Endothelial cell of umbilical vein (primary cell): ENCODE measurements at regions of chr7 and their contacts with region 1.

Region 1: DNA sequence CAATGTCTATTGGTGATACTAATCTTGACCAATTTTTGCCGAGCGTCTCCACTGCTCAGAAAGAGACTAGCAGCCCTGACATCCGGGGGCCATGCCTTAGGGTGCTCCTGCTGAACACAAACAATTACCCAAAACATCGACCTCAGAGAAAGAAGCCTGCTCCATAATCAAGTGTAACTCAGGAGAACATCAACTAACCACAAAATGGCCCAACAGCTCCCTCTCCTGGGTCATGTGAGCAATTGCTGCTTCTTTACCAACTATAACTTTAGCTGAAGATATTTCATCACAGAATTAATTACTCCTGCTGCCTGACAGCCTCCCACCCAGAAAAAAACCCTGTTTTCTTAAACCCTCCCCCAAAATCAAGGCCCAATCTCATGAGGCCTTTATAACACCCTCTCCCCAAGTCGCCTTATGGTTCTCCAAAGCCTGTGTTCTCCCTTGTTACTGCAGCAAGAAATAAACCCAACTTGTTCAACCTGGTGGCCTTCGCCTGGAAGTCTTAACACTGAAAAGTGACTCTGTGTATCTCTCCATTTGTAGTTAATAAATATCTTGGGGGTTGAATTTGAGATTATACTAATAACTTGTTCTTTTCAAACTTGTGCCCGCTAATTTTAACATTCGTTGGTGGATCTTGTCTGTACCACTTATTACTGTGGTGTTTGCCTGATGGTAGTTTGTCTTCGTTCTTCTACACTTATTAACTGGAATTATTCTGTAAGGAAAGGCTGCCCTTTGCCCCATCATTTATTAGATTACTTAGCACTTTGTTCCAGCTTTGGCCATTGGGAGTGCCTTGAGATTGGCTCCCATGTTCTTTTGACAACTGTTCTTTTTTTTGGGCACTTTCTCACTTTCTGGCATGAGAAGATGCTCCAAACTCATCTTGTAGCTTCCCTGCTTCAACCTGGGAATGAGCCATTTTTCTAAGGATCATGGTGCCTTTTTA is 21.2 kb upstream of the RAMP3 start:
- DNase-seq: peak; percentile 73
- H3K4me3 ChIP-seq: no peak overlapping the region
- H3K27ac ChIP-seq: no peak overlapping the region
- H3K4me1 ChIP-seq: no peaks in the 10 kb centered on the region
- H3K27me3 ChIP-seq: peaks cover 4 to 5% of the 10 kb centered on the region in 2 experiments
- CTCF ChIP-seq: peak; percentile 79 to 83
- POLR2A ChIP-seq: no peak

Region 2: DNA sequence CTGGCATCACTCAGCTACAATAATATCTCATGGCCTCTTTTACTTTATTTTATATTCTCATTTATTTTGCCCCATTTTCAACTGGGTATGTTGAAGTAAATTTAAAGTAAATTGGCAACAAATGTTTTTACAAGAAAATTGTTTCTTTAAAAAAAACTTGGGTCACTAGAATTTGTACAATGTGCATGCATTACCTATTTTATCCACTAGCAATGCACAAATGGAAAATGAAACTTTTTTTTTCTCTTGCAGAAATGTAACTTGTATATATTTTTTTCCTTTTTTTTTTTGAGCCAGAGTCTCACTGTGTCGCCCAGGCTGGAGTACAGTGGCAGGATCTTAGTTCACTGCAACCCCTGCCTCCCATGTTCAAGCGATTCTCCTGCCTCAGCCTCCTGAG is 278.2 kb before region 1 on chr7:
- CTCF ChIA-PET with region 1: interaction called, 66 read pairs
- POLR2A ChIA-PET with region 1: no interaction called
- dilution Hi-C with region 1: no loop called
- intact Hi-C with region 1: loop called (anchors 1 kb)
- DNase-seq: no peak
- H3K4me3 ChIP-seq: no peak overlapping the region
- H3K27ac ChIP-seq: no peak overlapping the region
- H3K4me1 ChIP-seq: no peaks in the 10 kb centered on the region
- H3K27me3 ChIP-seq: no peaks in the 10 kb centered on the region
- CTCF ChIP-seq: no peak
- POLR2A ChIP-seq: no peak

Region 3: DNA sequence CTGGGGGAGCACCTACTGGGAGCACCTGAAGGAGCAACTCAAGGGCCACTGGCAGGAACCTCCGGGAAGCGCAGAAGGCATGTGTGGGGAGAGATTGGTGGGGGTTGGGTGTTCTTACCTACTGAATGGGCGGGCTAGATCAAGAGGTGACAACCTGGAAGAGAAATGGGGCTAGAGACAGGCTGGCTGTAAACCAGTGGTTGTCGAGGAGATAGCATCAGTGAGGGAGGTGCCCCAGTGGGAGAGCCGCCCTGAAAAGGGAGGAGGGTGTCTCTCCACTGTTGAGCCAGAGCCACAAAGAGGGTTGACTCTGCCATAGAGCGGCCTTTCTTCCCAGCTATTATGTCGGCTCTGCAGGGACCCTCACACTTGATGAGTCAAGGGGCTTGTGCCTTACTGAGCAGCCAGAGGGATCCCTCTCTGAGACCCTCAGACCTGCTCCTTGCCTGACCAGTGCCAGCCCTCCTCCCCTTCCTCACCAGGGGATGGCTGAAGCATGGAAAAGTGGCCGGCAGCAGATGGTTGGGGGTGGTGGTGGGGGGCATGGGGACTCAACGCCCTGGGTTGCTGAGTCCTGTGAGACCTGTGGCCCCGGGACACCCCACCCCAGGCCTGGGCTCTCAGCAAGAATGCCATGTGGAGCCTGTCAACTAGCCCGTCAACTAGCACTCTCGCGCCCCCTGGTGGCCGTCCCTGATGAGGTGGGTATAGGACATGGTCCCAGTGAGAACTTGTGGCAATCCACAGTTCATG is 214.6 kb before region 1 on chr7:
- CTCF ChIA-PET with region 1: interaction called, 11 read pairs
- POLR2A ChIA-PET with region 1: no interaction called
- dilution Hi-C with region 1: no loop called
- intact Hi-C with region 1: loop called (anchors 1 kb)
- DNase-seq: peak; percentile 69
- H3K4me3 ChIP-seq: no peak overlapping the region
- H3K27ac ChIP-seq: no peak overlapping the region
- H3K4me1 ChIP-seq: no peaks in the 10 kb centered on the region
- H3K27me3 ChIP-seq: peaks cover 0 to 3% of the 10 kb centered on the region in 2 experiments
- CTCF ChIP-seq: peak; percentile 75 to 91
- POLR2A ChIP-seq: no peak

Region 4: GRCh38 chr7:44967571-44968446 is 168.6 kb before region 1 on chr7:
- CTCF ChIA-PET with region 1: interaction called, 585 read pairs
- POLR2A ChIA-PET with region 1: no interaction called
- dilution Hi-C with region 1: no loop called
- intact Hi-C with region 1: loop called (anchors 1 kb)
- DNase-seq: peak; percentile 29
- H3K4me3 ChIP-seq: no peak overlapping the region
- H3K27ac ChIP-seq: no peak overlapping the region
- H3K4me1 ChIP-seq: no peaks in the 10 kb centered on the region
- H3K27me3 ChIP-seq: no peaks in the 10 kb centered on the region
- CTCF ChIP-seq: peak in 1 of 2 donors; percentile 59
- POLR2A ChIP-seq: no peak

Region 5: GRCh38 chr7:45092100-45092928 is 44.1 kb before region 1 on chr7:
- CTCF ChIA-PET with region 1: interaction called, 10 read pairs
- POLR2A ChIA-PET with region 1: no interaction called
- dilution Hi-C with region 1: no loop called
- intact Hi-C with region 1: no loop called
- DNase-seq: no peak
- H3K4me3 ChIP-seq: no peak overlapping the region
- H3K27ac ChIP-seq: no peak overlapping the region
- H3K4me1 ChIP-seq: no peaks in the 10 kb centered on the region
- H3K27me3 ChIP-seq: peaks cover 3 to 11% of the 10 kb centered on the region in 2 experiments
- CTCF ChIP-seq: no peak
- POLR2A ChIP-seq: no peak

Region 6: DNA sequence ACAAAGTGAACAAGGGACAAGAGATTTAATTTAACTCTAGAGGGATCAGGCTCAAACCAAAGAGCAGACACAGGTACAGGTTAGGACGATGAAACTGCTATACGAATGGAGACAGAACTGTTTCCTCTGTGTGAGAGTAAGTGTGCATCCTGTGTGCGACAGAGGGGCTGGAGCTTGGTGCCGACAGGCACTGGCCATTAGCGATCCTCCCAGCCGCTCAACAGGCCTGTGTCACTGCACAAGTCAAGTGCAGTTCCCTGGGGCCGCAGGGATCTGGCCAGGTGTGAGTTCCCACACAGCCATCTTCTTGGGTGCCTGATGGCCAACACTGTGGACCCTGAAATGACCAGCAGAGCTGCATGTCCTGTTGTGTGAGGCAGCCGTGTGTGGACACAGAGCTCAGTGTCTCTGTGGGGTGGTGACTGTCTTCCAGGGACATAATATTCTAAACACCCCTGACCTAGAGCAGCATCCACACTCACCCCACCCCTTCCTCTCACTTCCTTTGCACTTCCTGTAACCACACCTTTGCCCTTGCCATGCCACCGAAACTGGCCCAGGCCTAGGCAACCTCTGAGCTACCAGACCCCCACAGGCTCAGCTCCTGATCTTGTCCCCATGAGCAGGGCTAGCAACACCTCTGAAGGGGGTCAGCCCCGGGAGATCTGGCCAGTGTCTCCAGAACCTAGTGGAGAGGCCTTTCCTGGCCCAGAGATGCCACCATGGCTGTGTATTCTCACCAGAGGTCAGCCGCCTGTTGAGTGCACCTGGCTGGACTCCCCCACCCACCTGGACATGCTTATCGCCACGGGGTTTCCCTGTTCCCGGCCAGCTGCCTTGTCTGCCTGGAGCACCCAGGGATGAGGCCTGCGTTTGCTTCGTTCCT is 13.2 kb before region 1 on chr7:
- CTCF ChIA-PET with region 1: interaction called, 22 read pairs
- POLR2A ChIA-PET with region 1: no interaction called
- dilution Hi-C with region 1: no loop called
- intact Hi-C with region 1: no loop called
- DNase-seq: no peak
- H3K4me3 ChIP-seq: no peak overlapping the region
- H3K27ac ChIP-seq: no peak overlapping the region
- H3K4me1 ChIP-seq: no peaks in the 10 kb centered on the region
- H3K27me3 ChIP-seq: no peaks in the 10 kb centered on the region
- CTCF ChIP-seq: no peak
- POLR2A ChIP-seq: no peak

Region 7: DNA sequence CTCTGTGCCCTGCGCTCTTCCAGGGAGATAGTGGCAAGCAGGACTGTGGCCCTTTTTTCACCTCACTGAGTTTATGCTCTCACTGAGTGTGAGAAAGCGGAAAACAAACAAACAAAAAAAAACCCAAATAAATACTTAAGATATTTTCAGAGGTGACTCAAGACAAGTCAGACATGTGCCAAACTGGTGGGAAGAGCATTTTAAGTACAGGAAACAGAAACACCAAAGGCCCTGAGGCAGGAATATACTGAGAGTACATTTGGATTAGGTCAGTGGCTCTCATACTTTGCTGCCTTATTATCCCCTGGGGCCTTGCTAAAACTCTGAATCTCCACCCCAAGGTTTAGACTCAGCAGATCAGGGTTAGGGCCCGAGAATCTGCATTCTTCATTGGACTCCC is 896.6 kb after region 1 on chr7:
- CTCF ChIA-PET with region 1: no interaction called
- POLR2A ChIA-PET with region 1: no interaction called
- dilution Hi-C with region 1: no loop called
- intact Hi-C with region 1: no loop called
- DNase-seq: no peak
- H3K4me3 ChIP-seq: no peak overlapping the region
- H3K27ac ChIP-seq: no peak overlapping the region
- H3K4me1 ChIP-seq: no peaks in the 10 kb centered on the region
- H3K27me3 ChIP-seq: no peaks in the 10 kb centered on the region
- CTCF ChIP-seq: no peak
- POLR2A ChIP-seq: no peak